ENCODE measurements at regions of chr4 and their contacts with region 1.

Region 1: GRCh38 chr4:185286571-185286970 is 77.2 kb downstream of the SNX25 start:
- DNase-seq: no peak
- H3K4me3 ChIP-seq: no peak overlapping the region
- H3K4me3 Mint-ChIP-seq: no peak overlapping the region
- H3K27ac Mint-ChIP-seq: no peak overlapping the region
- H3K4me1 ChIP-seq: peaks cover 5% of the 10 kb centered on the region
- H3K4me1 Mint-ChIP-seq: peaks cover 32% of the 10 kb centered on the region
- H3K27me3 ChIP-seq: no peaks in the 10 kb centered on the region
- H3K27me3 Mint-ChIP-seq: no peaks in the 10 kb centered on the region
- CTCF ChIP-seq: no peak

Region 2: DNA sequence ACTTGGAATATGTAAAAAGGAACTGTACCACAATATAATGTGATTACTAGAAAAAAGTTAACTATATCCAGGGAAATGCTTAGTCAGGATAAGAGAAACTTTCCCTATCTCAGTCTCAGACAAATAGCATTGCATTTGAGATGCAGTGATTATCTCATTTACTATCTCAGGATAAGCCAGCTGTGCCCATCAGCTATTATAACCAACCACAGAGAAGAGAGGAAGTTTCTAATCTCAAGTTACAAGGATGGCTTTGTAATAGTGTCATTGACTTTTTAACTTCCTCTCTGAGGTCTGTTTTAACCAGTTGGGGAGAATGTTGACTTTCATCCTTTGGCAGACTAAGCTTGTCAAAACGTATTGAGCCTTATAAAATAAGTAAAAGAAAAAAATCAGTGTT is 20.6 kb before region 1 on chr4:
- CTCF ChIA-PET with region 1: no interaction called
- POLR2A ChIA-PET with region 1: no interaction called
- intact Hi-C with region 1: loop called (anchors 1 kb)
- DNase-seq: no peak
- H3K4me3 ChIP-seq: no peak overlapping the region
- H3K4me3 Mint-ChIP-seq: no peak overlapping the region
- H3K27ac Mint-ChIP-seq: no peak overlapping the region
- H3K4me1 ChIP-seq: peaks cover 18% of the 10 kb centered on the region
- H3K4me1 Mint-ChIP-seq: peaks cover 20% of the 10 kb centered on the region
- H3K27me3 ChIP-seq: no peaks in the 10 kb centered on the region
- H3K27me3 Mint-ChIP-seq: no peaks in the 10 kb centered on the region
- CTCF ChIP-seq: no peak